HEK293 (cell line): ENCODE measurements at regions of chr10 and their contacts with region 1.

Region 1: DNA sequence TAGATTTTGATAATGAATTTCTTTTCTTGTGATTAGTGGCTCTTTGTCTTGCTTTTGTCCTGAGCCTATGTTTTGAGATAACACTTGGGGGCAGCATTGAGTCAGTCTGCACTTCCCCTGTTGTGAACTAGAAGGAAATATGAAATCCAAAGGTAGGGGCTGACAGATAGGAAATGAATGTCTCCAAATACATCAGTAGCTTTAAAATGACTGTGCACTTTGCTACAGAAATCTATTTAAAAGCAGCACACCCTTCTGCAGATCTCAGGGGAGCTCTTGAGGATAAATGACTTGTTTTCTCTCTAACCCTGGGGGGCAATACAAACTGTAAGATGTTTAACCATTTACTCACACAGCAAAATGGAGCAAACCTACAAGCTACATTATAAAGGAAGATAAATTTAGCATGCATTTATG is 176.0 kb upstream of the MYO3A start:
- H3K4me3 ChIP-seq: no peak overlapping the region
- H3K27ac ChIP-seq: no peak overlapping the region
- H3K4me1 ChIP-seq: no peaks in the 10 kb centered on the region
- CTCF ChIP-seq: peak; percentile 42

Region 2: GRCh38 chr10:25747084-25747483 is 11.0 kb before region 1 on chr10:
- CTCF ChIA-PET with region 1: interaction called, 20 read pairs
- POLR2A ChIA-PET with region 1: no interaction called
- H3K4me3 ChIP-seq: no peak overlapping the region
- H3K27ac ChIP-seq: no peak overlapping the region
- H3K4me1 ChIP-seq: no peaks in the 10 kb centered on the region; the same call in 1 of the 2 replicates
- CTCF ChIP-seq: no peak

Region 3: DNA sequence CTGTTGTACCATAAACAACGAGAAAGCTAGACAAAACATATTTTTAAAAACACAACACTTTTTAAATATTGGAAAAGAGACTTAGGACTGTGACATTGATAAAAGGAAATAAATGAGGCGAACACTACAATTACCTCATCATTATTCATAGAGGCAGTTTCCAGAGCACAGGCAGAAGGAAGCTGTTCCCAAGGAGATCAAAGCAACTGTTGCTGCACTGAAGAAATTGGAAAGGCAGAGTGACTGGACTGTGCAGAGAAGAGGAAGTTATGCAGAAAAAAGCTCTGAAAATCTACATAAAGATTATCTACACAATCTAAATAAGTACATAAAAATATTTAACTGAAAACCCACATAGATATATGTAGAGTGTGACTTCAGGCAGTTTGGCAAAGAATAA is 208.8 kb after region 1 on chr10:
- CTCF ChIA-PET with region 1: no interaction called
- POLR2A ChIA-PET with region 1: no interaction called
- H3K4me3 ChIP-seq: no peak overlapping the region
- H3K27ac ChIP-seq: no peak overlapping the region
- H3K4me1 ChIP-seq: no peaks in the 10 kb centered on the region
- CTCF ChIP-seq: no peak

Region 4: DNA sequence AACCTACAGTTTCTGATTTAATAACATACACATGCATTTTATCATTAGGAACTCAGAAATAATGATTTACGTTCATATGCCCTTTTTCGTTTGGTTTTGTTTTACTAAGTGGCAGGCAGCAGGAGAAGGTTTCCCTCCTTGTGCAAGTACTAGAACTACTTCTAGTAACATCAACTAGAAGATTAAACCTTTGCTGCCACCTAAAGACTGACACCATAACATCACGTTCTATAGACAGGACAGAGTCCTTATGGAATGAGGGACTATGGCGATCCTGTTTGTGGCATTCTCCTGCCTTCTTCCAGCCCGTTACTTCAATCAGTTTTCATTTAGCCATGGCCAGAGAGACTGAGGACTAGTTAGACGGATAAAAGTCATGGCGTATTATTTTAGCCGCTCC is 511.7 kb after region 1 on chr10:
- CTCF ChIA-PET with region 1: interaction called, 32 read pairs
- POLR2A ChIA-PET with region 1: no interaction called
- H3K4me3 ChIP-seq: no peak overlapping the region
- H3K27ac ChIP-seq: no peak overlapping the region
- H3K4me1 ChIP-seq: no peaks in the 10 kb centered on the region
- CTCF ChIP-seq: peak; percentile 45; the same call in 1 of the 2 replicates